ENCODE measurements at regions of chr1 and their contacts with region 1.

Region 1: GRCh38 chr1:112390775-112391602 is 5.0 kb upstream of the CTTNBP2NL start:
- DNase-seq: peak; percentile 85
- CTCF ChIP-seq: peak; percentile 85

Region 2: GRCh38 chr1:112410673-112411072 is 19.7 kb after region 1 on chr1:
- CTCF ChIA-PET with region 1: interaction called, 14 read pairs
- POLR2A ChIA-PET with region 1: interaction called, 3 read pairs
- DNase-seq: no peak
- CTCF ChIP-seq: no peak

Region 3: DNA sequence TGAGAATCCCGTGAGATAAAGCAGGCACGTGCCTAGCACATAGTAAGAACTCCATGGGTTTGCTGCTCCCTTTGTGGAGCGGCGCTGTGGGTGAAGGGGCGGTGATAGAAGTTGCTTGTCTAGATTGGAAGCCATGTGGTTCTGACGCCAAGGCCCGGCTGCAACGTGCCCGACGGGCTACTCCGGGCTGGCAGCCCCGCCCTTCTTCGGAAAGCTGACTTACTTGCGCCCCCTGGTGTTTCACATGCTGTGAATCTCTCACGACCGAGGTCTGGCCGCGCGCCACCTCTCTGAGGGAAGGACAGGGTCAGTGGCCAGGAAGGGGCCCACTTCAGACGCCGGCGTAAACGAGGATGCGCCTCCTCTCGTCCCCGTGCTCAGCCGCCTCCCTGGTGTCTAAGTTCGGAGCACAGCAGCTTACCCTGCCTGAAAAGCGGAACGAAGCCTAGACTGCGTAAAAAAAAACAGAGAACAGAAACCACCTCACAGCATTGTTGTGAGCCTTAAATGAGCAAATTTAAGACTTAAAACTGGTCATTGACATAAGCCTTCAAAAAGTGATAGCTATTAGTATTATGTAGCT is 75.2 kb after region 1 on chr1:
- CTCF ChIA-PET with region 1: interaction called, 76 read pairs
- POLR2A ChIA-PET with region 1: interaction called, 9 read pairs
- DNase-seq: peak; percentile 87
- CTCF ChIP-seq: peak; percentile 87

Region 4: GRCh38 chr1:112501810-112502641 is 111.0 kb after region 1 on chr1:
- CTCF ChIA-PET with region 1: interaction called, 13 read pairs
- POLR2A ChIA-PET with region 1: no interaction called
- DNase-seq: peak; percentile 67
- CTCF ChIP-seq: peak; percentile 89

Region 5: GRCh38 chr1:112674439-112674985 is 283.5 kb after region 1 on chr1 and contains the start of gene MOV10:
- CTCF ChIA-PET with region 1: interaction called, 10 read pairs
- POLR2A ChIA-PET with region 1: no interaction called
- DNase-seq: peak; percentile 74
- CTCF ChIP-seq: no peak

Region 6: DNA sequence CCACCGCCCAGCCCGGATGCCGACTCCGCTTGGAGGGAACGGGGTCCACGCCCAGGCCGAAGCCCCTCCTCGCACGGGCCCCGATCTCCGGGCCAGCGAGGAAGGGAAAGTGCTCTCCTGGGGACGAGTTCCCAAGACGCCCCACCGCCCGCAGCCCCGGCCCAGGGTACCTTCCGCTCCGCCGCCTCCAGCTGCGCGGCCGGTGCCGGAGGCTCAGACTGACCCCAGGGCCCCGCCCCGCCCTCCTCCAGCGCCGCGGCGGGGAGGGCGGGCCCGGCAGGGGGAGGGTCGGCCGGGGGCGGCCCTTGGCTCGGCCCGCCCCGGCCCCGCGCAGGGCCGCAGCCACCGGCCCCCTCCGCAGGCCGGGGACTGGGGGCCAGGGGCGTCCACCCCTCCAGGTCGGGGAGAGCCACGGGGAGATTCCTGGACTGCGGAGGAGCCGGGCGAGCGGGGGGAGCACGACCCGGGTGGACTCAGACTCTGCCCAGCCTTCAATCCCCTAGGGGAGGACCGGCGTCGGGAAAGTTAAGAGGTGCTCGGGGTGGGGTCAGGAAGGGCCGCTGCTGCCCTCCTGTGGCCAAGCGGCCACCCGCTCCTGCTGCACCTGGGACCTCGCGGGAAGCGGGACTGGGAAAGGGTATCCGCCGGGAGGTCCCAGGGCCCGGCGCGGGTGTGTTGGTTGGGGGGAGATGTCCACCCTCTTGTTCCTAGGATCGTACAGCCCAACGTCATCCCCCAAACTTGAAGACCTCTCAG is 316.1 kb after region 1 on chr1 and contains the start of gene RHOC:
- CTCF ChIA-PET with region 1: interaction called, 105 read pairs
- POLR2A ChIA-PET with region 1: interaction called, 9 read pairs
- DNase-seq: peak; percentile 90
- CTCF ChIP-seq: peak; percentile 96

Region 7: GRCh38 chr1:112803906-112804762 is 413.1 kb after region 1 on chr1:
- CTCF ChIA-PET with region 1: interaction called, 18 read pairs
- POLR2A ChIA-PET with region 1: no interaction called
- DNase-seq: peak; percentile 83
- CTCF ChIP-seq: peak; percentile 97